H1 (cell line): ENCODE measurements at regions of chr6 and their contacts with region 1.

Region 1: DNA sequence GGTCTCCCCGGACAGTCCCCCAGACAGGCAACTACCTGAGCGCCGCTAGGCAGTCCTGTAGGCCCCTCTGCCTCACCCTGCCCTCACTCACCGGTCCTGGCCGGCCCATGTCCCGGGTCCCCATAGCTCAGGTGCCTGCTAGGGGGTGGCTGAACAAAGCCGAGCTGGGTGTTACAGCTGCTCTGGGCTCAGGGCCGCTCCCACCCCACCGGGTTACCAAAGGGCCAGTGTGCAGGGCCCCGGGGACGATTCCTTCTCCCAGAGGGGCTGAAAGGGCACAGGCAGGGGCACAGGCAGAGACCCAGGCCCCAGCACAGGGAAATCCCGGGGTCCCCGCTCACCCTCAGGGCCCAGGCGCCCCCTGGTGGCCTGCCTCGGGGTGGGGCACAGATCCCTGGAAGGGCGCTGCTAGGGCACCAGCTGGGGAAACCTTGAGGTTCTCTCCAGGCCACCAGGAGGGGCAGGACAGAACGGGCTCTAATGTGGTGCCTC is 118.4 kb downstream of the GRM4 start:
- DNase-seq: peak; percentile 29 to 97
- H3K4me3 ChIP-seq: no peak overlapping the region
- H3K27ac ChIP-seq: no peak overlapping the region
- H3K4me1 ChIP-seq: peaks cover 0 to 2% (median 0%) of the 10 kb centered on the region in 4 experiments; a peak in 1 of 7 replicates
- H3K27me3 ChIP-seq: no peaks in the 10 kb centered on the region
- CTCF ChIP-seq: peak in 2 of 3 experiments; percentile 86 to 98; a peak in 3 of 4 replicates
- EP300 ChIP-seq: no peak
- POLR2A ChIP-seq: no peak
- RAD21 ChIP-seq: peak; percentile 89 to 93

Region 2: GRCh38 chr6:33744001-33744848 is 283.3 kb before region 1 on chr6:
- CTCF ChIA-PET with region 1: interaction called, 35 read pairs
- POLR2A ChIA-PET with region 1: no interaction called
- DNase-seq: peak; percentile 62 to 90
- H3K4me3 ChIP-seq: no peak overlapping the region
- H3K27ac ChIP-seq: no peak overlapping the region
- H3K4me1 ChIP-seq: peaks cover 7 to 35% (median 23%) of the 10 kb centered on the region in 4 experiments
- H3K27me3 ChIP-seq: no peaks in the 10 kb centered on the region; a peak in 2 of 7 replicates
- CTCF ChIP-seq: peak in 2 of 3 experiments; percentile 96 to 99; a peak in 3 of 4 replicates
- EP300 ChIP-seq: no peak
- POLR2A ChIP-seq: no peak
- RAD21 ChIP-seq: peak; percentile 86 to 90

Region 3: DNA sequence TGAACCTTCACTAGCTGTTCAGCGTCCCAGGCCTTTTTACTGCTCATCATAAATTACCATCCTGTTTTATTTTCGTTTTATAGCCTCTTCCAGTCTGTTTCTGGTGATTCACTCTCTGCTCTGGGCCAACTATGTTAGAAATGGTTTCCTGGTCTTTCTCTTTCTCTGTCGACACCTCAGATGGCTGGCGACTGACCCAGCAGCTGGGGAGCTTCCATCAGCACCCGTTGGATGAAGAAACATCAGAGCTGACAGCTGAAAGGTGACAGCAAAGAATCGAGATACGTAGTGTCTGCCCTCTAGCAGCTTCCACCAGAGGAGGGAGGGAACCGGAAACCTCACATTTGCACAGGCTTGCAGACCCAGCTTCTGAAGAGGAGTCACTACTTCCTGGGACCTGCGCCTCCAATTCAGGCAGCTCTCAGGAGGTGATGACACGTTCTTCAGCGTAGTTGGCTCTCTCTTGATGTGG is 140.8 kb before region 1 on chr6:
- CTCF ChIA-PET with region 1: no interaction called
- POLR2A ChIA-PET with region 1: no interaction called
- DNase-seq: no peak
- H3K4me3 ChIP-seq: no peak overlapping the region
- H3K27ac ChIP-seq: no peak overlapping the region
- H3K4me1 ChIP-seq: no peaks in the 10 kb centered on the region
- H3K27me3 ChIP-seq: no peaks in the 10 kb centered on the region
- CTCF ChIP-seq: no peak
- EP300 ChIP-seq: no peak
- POLR2A ChIP-seq: no peak
- RAD21 ChIP-seq: no peak

Region 4: GRCh38 chr6:33958526-33959333 is 68.8 kb before region 1 on chr6:
- CTCF ChIA-PET with region 1: interaction called, 234 read pairs
- POLR2A ChIA-PET with region 1: no interaction called
- DNase-seq: peak in 1 of 2 experiments; percentile 82
- H3K4me3 ChIP-seq: no peak overlapping the region
- H3K27ac ChIP-seq: no peak overlapping the region
- H3K4me1 ChIP-seq: peaks cover 8 to 12% (median 10%) of the 10 kb centered on the region in 4 experiments
- H3K27me3 ChIP-seq: no peaks in the 10 kb centered on the region; a peak in 1 of 7 replicates
- CTCF ChIP-seq: peak in 2 of 3 experiments; percentile 70 to 79; a peak in 3 of 4 replicates
- EP300 ChIP-seq: no peak
- POLR2A ChIP-seq: no peak
- RAD21 ChIP-seq: peak; percentile 56 to 72

Region 5: GRCh38 chr6:33988121-33989015 is 39.1 kb before region 1 on chr6:
- CTCF ChIA-PET with region 1: interaction called, 47 read pairs
- POLR2A ChIA-PET with region 1: no interaction called
- DNase-seq: no peak
- H3K4me3 ChIP-seq: no peak overlapping the region
- H3K27ac ChIP-seq: no peak overlapping the region
- H3K4me1 ChIP-seq: peaks cover 0 to 11% (median 5%) of the 10 kb centered on the region in 4 experiments; a peak in 2 of 7 replicates
- H3K27me3 ChIP-seq: peaks cover 0 to 2% (median 0%) of the 10 kb centered on the region in 4 experiments; a peak in 2 of 7 replicates
- CTCF ChIP-seq: no peak
- EP300 ChIP-seq: no peak
- POLR2A ChIP-seq: no peak
- RAD21 ChIP-seq: no peak

Region 6: DNA sequence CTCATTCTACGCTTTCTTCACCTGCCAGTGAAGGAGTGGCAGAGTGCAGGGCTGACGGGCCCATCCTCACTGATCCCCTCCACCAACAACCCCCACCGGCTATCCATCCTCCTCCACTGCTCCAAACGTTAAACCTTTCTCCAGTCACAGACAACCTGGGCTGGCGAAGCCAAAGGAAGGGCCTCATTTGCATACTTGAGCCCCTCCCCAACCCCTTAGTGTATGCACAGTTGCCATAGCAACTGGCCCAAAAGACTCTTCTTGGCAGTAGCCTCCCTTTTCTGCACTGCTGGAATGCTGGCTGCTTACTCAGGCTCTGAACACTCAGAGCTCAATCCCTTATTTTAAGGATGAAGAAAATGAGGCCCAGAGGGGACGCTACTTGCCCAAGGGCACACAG is 11.9 kb before region 1 on chr6:
- CTCF ChIA-PET with region 1: interaction called, 30 read pairs
- POLR2A ChIA-PET with region 1: no interaction called
- DNase-seq: no peak
- H3K4me3 ChIP-seq: no peak overlapping the region
- H3K27ac ChIP-seq: no peak overlapping the region
- H3K4me1 ChIP-seq: peaks cover 0 to 2% (median under 1%) of the 10 kb centered on the region in 4 experiments; a peak in 3 of 7 replicates
- H3K27me3 ChIP-seq: peaks cover 5 to 41% (median 35%) of the 10 kb centered on the region in 4 experiments
- CTCF ChIP-seq: no peak
- EP300 ChIP-seq: no peak
- POLR2A ChIP-seq: no peak
- RAD21 ChIP-seq: no peak

Region 7: GRCh38 chr6:34154668-34155447 is 127.4 kb after region 1 on chr6:
- CTCF ChIA-PET with region 1: interaction called, 25 read pairs
- POLR2A ChIA-PET with region 1: interaction called, 4 read pairs
- DNase-seq: peak in 1 of 2 experiments; percentile 99
- H3K4me3 ChIP-seq: peak overlapping the region; percentile 3 to 72 (median 48)
- H3K27ac ChIP-seq: no peak overlapping the region
- H3K4me1 ChIP-seq: peaks cover 3 to 30% (median 10%) of the 10 kb centered on the region in 4 experiments
- H3K27me3 ChIP-seq: peaks cover 8 to 41% (median 26%) of the 10 kb centered on the region in 4 experiments
- CTCF ChIP-seq: peak in 2 of 3 experiments; percentile 93 to 98; a peak in 3 of 4 replicates
- EP300 ChIP-seq: no peak
- POLR2A ChIP-seq: no peak
- RAD21 ChIP-seq: peak; percentile 98 to 99